ENCODE measurements at regions of chr1 and their contacts with region 1.

Region 1: GRCh38 chr1:155859234-155859829 is at the start of gene SYT11:
- DNase-seq: peak; percentile 94
- ATAC-seq: peak; percentile 83
- H3K4me3 ChIP-seq: peak within 1 kb of the TSS; percentile 78 to 90 (median 82)
- H3K27ac ChIP-seq: peak within 1 kb of the TSS; percentile 57
- H3K4me1 ChIP-seq: peaks cover 23% of the 10 kb centered on the region
- H3K27me3 ChIP-seq: no peaks in the 10 kb centered on the region
- CTCF ChIP-seq: 0 out of 2 replicates have a peak, but pooled peaks have one; percentile 26
- EP300 ChIP-seq: no peak
- POLR2A ChIP-seq: no peak
- RAD21 ChIP-seq: no peak
- total RNA-seq, gene SYT11: 0.08 and 0.22 TPM in 2 replicates

Region 2: DNA sequence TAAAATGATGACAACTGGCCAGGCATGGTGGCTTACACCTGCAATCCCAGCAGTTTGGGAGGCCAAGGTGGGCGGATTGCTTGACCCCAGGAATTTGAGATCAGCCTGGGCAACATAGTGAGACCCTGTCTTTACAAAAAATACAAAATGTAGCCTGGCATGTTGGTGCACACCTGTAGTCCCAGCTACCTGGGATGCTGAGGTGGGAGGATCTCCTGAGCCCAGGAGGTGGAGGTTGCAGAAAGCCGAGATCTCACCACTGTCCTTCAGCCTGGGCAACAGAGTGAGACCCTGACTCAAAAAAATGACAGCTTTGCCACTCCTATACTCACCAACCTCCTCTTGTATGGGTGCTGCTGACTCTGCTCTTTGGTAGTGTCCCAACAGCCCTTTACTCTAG is 18.6 kb after region 1 on chr1:
- CTCF ChIA-PET with region 1: no interaction called
- POLR2A ChIA-PET with region 1: no interaction called
- in situ Hi-C with region 1: no loop called
- intact Hi-C with region 1: loop called (anchors 2 kb)
- DNase-seq: no peak
- ATAC-seq: no peak
- H3K4me3 ChIP-seq: no peak overlapping the region
- H3K27ac ChIP-seq: no peak overlapping the region
- H3K4me1 ChIP-seq: peaks cover 19% of the 10 kb centered on the region; the same call in 1 of the 2 replicates
- H3K27me3 ChIP-seq: 0 out of 5 replicates have a peak, but pooled peaks cover 0 to 3% of the 10 kb centered on the region in 2 experiments
- CTCF ChIP-seq: no peak
- EP300 ChIP-seq: no peak
- POLR2A ChIP-seq: no peak
- RAD21 ChIP-seq: no peak

Region 3: DNA sequence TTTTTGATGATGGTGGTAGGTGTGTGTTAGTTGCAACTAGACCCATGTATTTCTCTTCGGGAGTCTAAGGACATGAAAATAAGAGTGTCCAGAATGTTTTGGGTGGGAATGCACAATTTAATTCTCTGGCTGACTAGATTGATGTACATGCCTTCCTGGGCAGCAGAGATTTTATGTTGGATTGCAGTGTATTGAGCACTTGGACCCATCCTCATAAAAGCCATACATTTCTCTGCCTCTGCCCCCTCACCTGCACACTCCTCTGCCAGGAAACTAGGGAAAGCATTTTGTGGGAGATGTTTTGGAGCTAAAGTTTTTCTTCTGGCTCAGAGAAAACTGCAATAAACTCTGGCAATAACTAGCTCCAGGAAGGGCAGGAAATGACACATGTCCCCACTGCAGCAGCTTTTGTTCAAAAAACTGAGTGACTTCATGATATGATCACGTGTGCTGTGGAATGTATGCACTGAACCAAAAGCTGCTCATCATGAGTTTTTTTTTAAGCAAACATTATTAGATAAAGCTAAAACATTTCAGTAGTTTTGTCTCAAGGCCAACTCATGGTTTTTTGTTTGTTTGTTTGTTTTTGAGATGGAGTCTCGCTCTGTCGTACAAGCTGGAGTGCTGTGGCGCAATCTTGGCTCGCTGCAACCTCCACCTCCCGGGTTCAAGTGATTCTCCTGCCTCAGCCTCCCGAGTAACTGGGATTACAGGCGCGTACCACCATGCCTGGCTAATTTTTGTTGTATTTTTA is 34.2 kb after region 1 on chr1:
- CTCF ChIA-PET with region 1: no interaction called
- POLR2A ChIA-PET with region 1: interaction called, 11 read pairs
- in situ Hi-C with region 1: no loop called
- intact Hi-C with region 1: no loop called
- DNase-seq: peak; percentile 85
- ATAC-seq: peak; percentile 85
- H3K4me3 ChIP-seq: no peak overlapping the region
- H3K27ac ChIP-seq: peak overlapping the region; percentile 49
- H3K4me1 ChIP-seq: peaks cover 33% of the 10 kb centered on the region
- H3K27me3 ChIP-seq: no peaks in the 10 kb centered on the region
- CTCF ChIP-seq: no peak
- EP300 ChIP-seq: peak in 1 of 2 experiments; percentile 42; a peak in 1 of 4 replicates
- POLR2A ChIP-seq: peak in 1 of 2 experiments; percentile 25; a peak in 1 of 4 replicates
- RAD21 ChIP-seq: no peak

Region 4: DNA sequence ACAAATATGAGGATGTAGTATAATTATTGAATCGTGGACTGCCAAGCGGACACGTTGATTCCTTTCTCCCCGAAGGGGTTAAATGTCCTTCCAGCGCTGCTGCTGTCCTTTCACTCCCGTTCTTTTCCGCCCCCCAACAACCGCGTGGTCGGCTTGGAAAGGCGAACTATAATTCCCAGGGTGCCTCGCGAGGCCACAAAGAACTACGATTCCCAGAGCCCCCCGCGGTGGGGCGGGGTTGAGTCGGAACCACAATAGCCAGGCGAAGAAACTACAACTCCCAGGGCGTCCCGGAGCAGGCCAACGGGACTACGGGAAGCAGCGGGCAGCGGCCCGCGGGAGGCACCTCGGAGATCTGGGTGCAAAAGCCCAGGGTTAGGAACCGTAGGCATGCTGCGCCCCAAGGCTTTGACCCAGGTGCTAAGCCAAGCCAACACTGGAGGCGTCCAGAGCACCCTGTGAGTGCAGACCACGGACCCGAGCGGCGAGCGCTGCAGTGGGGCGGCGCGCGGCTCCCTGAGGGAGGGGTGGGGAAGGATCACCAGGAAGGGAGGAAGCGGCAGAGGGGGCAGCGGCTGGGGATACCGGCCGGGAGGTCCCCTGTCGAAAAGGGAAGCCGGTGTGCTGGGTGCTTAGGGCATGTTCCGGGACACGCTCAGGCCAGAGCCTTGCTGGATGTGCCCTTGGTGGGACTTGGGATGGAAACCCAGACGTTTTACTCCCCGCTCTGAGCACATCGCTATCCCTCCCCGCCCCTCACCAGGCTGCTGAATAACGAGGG is 195.4 kb after region 1 on chr1 and contains the start of gene LAMTOR2:
- CTCF ChIA-PET with region 1: no interaction called
- POLR2A ChIA-PET with region 1: no interaction called
- in situ Hi-C with region 1: no loop called
- intact Hi-C with region 1: no loop called
- DNase-seq: peak; percentile 97
- ATAC-seq: peak; percentile 88
- H3K4me3 ChIP-seq: peak within 1 kb of the TSS; percentile 94 to 97 (median 96)
- H3K27ac ChIP-seq: peak within 1 kb of the TSS; percentile 100
- H3K4me1 ChIP-seq: peaks cover 27% of the 10 kb centered on the region
- H3K27me3 ChIP-seq: no peaks in the 10 kb centered on the region; a peak in 1 of 5 replicates
- CTCF ChIP-seq: peak; percentile 19
- EP300 ChIP-seq: peak in 1 of 2 experiments; percentile 36; a peak in 1 of 4 replicates
- POLR2A ChIP-seq: peak; percentile 50 to 89; a peak in 3 of 4 replicates
- RAD21 ChIP-seq: peak; percentile 59
- total RNA-seq, gene LAMTOR2: 66.4 and 84.0 TPM in 2 replicates

Region 5: GRCh38 chr1:156371553-156372264 is 512.4 kb after region 1 on chr1:
- CTCF ChIA-PET with region 1: no interaction called
- POLR2A ChIA-PET with region 1: no interaction called
- in situ Hi-C with region 1: no loop called
- intact Hi-C with region 1: no loop called
- DNase-seq: peak; percentile 99
- ATAC-seq: peak; percentile 68
- H3K4me3 ChIP-seq: peak overlapping the region; percentile 18 to 90 (median 25); a peak in 5 of 6 replicates
- H3K27ac ChIP-seq: peak overlapping the region; percentile 98
- H3K4me1 ChIP-seq: peaks cover 88% of the 10 kb centered on the region
- H3K27me3 ChIP-seq: no peaks in the 10 kb centered on the region; a peak in 1 of 5 replicates
- CTCF ChIP-seq: peak; percentile 25; the same call in 1 of the 2 replicates
- EP300 ChIP-seq: peak; percentile 83 to 98
- POLR2A ChIP-seq: peak in 1 of 2 experiments; percentile 57; a peak in 3 of 4 replicates
- RAD21 ChIP-seq: no peak